ENCODE measurements at regions of chr9 and their contacts with region 1.

Region 1: DNA sequence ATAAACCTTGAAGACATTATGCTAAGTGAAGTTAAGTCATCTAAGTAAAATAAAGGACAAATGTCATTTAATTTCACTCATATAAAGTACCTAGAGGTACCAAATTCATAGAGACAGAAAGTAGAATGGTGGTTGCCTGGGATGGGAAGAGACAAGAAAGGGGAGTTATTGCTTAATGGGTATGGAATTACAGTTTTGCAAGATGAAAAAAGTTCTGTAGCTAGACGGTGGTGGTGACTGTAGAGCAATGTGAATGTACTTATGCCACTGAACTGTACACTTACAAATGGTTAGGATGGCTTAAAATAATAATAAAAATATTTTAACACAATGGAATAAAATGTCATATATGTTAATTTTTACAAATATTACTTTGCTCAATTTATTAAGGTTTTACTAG is 128.0 kb downstream of the MPDZ start:
- DNase-seq: no peak
- ATAC-seq: no peak
- H3K4me3 ChIP-seq: no peak overlapping the region
- H3K27ac ChIP-seq: no peak overlapping the region
- H3K4me1 ChIP-seq: no peaks in the 10 kb centered on the region
- H3K27me3 ChIP-seq: no peaks in the 10 kb centered on the region; the same call in 1 of the 2 replicates
- CTCF ChIP-seq: no peak
- POLR2A ChIP-seq: no peak
- RAD21 ChIP-seq: no peak

Region 2: GRCh38 chr9:12972608-12973589 is 178.6 kb before region 1 on chr9:
- CTCF ChIA-PET with region 1: no interaction called
- POLR2A ChIA-PET with region 1: no interaction called
- RAD21 ChIA-PET with region 1: no interaction called
- intact Hi-C with region 1: no loop called
- DNase-seq: no peak
- ATAC-seq: 0 out of 2 replicates have a peak, but pooled peaks have one; percentile 53
- H3K4me3 ChIP-seq: no peak overlapping the region
- H3K27ac ChIP-seq: no peak overlapping the region
- H3K4me1 ChIP-seq: no peaks in the 10 kb centered on the region
- H3K27me3 ChIP-seq: no peaks in the 10 kb centered on the region
- CTCF ChIP-seq: no peak
- POLR2A ChIP-seq: no peak
- RAD21 ChIP-seq: no peak

Region 3: GRCh38 chr9:13109781-13110180 is 41.7 kb before region 1 on chr9:
- CTCF ChIA-PET with region 1: no interaction called
- POLR2A ChIA-PET with region 1: no interaction called
- RAD21 ChIA-PET with region 1: no interaction called
- intact Hi-C with region 1: loop called (anchors 5 kb)
- DNase-seq: no peak
- ATAC-seq: no peak
- H3K4me3 ChIP-seq: no peak overlapping the region
- H3K27ac ChIP-seq: no peak overlapping the region
- H3K4me1 ChIP-seq: no peaks in the 10 kb centered on the region
- H3K27me3 ChIP-seq: peaks cover 21% of the 10 kb centered on the region
- CTCF ChIP-seq: no peak
- POLR2A ChIP-seq: no peak
- RAD21 ChIP-seq: no peak

Measured in HCT116 (cell line).